H1 (cell line): ENCODE measurements at regions of chr5 and their contacts with region 1.

Region 1: GRCh38 chr5:157303667-157304327 is 37.9 kb downstream of the CYFIP2 start:
- DNase-seq: peak in 1 of 2 experiments; percentile 84
- H3K4me3 ChIP-seq: no peak overlapping the region
- H3K27ac ChIP-seq: no peak overlapping the region
- H3K4me1 ChIP-seq: no peaks in the 10 kb centered on the region
- H3K27me3 ChIP-seq: no peaks in the 10 kb centered on the region
- CTCF ChIP-seq: peak; percentile 82 to 99 (median 95)
- EP300 ChIP-seq: no peak
- POLR2A ChIP-seq: no peak
- RAD21 ChIP-seq: peak; percentile 43 to 63; a peak in 3 of 4 replicates

Region 2: GRCh38 chr5:156715287-156715686 is 588.5 kb before region 1 on chr5:
- CTCF ChIA-PET with region 1: no interaction called
- POLR2A ChIA-PET with region 1: no interaction called
- DNase-seq: no peak
- H3K4me3 ChIP-seq: no peak overlapping the region
- H3K27ac ChIP-seq: no peak overlapping the region
- H3K4me1 ChIP-seq: peaks cover 0 to 11% (median 3%) of the 10 kb centered on the region in 4 experiments; a peak in 3 of 7 replicates
- H3K27me3 ChIP-seq: no peaks in the 10 kb centered on the region
- CTCF ChIP-seq: no peak
- EP300 ChIP-seq: no peak
- POLR2A ChIP-seq: no peak
- RAD21 ChIP-seq: no peak

Region 3: DNA sequence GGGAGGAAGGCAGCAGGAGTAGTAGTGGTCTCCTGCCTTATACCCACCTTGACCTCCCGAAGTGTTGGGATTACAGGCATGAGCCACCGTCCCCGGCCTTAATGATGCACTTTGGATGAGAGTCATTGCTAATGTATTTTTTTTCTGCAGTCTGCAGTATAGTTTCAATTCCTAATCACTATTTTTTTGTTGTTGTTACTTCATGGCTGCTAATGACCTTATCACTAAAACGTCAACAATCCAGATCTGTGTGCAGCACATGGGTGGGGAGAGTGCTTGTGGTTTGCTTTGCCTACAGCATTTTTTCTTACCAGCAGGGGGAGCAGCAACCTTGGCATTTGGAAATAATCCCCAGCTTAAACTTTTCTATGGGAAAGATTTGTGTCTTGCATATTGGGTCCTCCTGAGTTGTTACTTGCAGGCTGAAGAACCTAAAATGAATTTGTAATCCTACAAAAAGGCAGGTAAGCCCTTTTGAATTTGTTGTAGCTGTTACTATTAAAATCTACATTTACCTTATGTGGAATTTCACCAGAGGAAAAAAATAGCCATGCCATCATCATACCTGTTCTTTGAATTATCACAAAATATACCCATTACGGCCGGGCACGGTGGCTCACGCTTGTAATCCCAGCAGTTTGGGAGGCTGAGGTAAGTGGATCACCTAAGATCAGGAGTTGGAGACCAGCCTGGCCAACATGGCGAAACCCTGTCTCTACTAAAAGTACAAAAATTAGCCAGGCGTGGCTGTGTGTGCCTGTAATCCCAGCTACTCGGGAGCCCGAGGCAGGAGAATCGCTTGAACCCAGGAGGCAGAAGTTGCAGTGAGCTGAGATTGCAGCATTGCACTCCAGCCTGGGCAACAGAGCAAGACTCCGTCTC is 154.8 kb before region 1 on chr5:
- CTCF ChIA-PET with region 1: interaction called, 10 read pairs
- POLR2A ChIA-PET with region 1: no interaction called
- DNase-seq: peak; percentile 21 to 79
- H3K4me3 ChIP-seq: no peak overlapping the region
- H3K27ac ChIP-seq: no peak overlapping the region
- H3K4me1 ChIP-seq: no peaks in the 10 kb centered on the region
- H3K27me3 ChIP-seq: no peaks in the 10 kb centered on the region
- CTCF ChIP-seq: peak; percentile 47 to 82 (median 73)
- EP300 ChIP-seq: no peak
- POLR2A ChIP-seq: no peak
- RAD21 ChIP-seq: peak; percentile 77 to 82

Region 4: DNA sequence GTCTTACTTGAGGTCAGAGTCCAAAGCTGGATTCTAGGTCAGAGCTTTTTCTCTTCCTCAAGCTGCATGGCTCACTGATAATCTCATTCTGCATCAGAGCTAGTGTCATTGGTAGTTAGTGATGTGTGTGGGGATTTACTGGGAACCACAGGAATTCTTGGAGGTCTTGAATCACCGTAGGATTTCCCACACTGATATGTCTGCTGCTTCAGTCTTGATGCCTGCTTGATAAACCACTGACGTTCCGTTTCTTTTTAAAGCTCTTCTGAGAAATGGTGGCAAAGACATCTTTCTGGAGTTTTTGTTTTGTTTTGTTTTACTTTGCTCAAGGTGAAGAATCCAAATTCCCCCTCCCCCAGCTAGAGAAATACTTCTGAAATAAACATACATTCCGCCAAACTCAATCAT is 136.6 kb before region 1 on chr5:
- CTCF ChIA-PET with region 1: no interaction called
- POLR2A ChIA-PET with region 1: no interaction called
- DNase-seq: no peak
- H3K4me3 ChIP-seq: no peak overlapping the region
- H3K27ac ChIP-seq: no peak overlapping the region
- H3K4me1 ChIP-seq: no peaks in the 10 kb centered on the region
- H3K27me3 ChIP-seq: no peaks in the 10 kb centered on the region
- CTCF ChIP-seq: no peak
- EP300 ChIP-seq: no peak
- POLR2A ChIP-seq: no peak
- RAD21 ChIP-seq: no peak

Region 5: DNA sequence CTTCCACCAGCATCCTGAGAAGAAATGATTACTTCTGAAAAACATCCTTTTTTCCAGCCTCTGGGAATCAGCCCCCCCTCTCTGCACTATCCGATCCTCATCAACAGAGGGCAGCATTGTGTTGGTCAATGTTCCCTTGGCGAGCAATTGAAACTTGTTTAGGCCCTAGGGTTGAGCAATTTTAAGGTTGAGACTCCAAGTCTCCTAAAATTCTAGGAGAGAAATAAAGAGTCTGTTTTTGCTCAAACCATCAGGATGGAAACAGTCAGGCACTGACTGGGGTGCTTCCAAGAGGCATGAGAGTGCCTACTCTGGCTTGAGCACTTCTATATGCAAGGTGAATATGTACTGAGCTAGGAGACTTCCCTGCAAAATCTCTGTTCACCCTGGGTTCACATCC is 50.2 kb before region 1 on chr5:
- CTCF ChIA-PET with region 1: interaction called, 53 read pairs
- POLR2A ChIA-PET with region 1: no interaction called
- DNase-seq: peak in 1 of 2 experiments; percentile 83
- H3K4me3 ChIP-seq: no peak overlapping the region
- H3K27ac ChIP-seq: no peak overlapping the region
- H3K4me1 ChIP-seq: no peaks in the 10 kb centered on the region
- H3K27me3 ChIP-seq: no peaks in the 10 kb centered on the region
- CTCF ChIP-seq: peak; percentile 69 to 90 (median 85)
- EP300 ChIP-seq: no peak
- POLR2A ChIP-seq: no peak
- RAD21 ChIP-seq: peak; percentile 83 to 90

Region 6: GRCh38 chr5:157265714-157266285 is 38.0 kb before region 1 on chr5 and contains the start of gene CYFIP2:
- CTCF ChIA-PET with region 1: interaction called, 28 read pairs
- POLR2A ChIA-PET with region 1: interaction called, 4 read pairs
- DNase-seq: no peak
- H3K4me3 ChIP-seq: peak within 1 kb of the TSS; percentile 59 to 82 (median 68)
- H3K27ac ChIP-seq: peak within 1 kb of the TSS; percentile 60; the same call in 1 of the 2 replicates
- H3K4me1 ChIP-seq: peaks cover 8 to 19% (median 13%) of the 10 kb centered on the region in 4 experiments
- H3K27me3 ChIP-seq: no peaks in the 10 kb centered on the region; a peak in 2 of 7 replicates
- CTCF ChIP-seq: no peak
- EP300 ChIP-seq: no peak
- POLR2A ChIP-seq: peak in 1 of 2 experiments; percentile 73; a peak in 2 of 3 replicates
- RAD21 ChIP-seq: no peak
- total RNA-seq, gene CYFIP2: 80.6 and 85.3 TPM in 2 replicates

Region 7: GRCh38 chr5:157271740-157272271 is 32.0 kb before region 1 on chr5:
- CTCF ChIA-PET with region 1: interaction called, 28 read pairs
- POLR2A ChIA-PET with region 1: interaction called, 4 read pairs
- DNase-seq: no peak
- H3K4me3 ChIP-seq: no peak overlapping the region
- H3K27ac ChIP-seq: no peak overlapping the region
- H3K4me1 ChIP-seq: peaks cover 5 to 15% (median 10%) of the 10 kb centered on the region in 4 experiments
- H3K27me3 ChIP-seq: no peaks in the 10 kb centered on the region
- CTCF ChIP-seq: no peak
- EP300 ChIP-seq: no peak
- POLR2A ChIP-seq: no peak
- RAD21 ChIP-seq: no peak

Region 8: DNA sequence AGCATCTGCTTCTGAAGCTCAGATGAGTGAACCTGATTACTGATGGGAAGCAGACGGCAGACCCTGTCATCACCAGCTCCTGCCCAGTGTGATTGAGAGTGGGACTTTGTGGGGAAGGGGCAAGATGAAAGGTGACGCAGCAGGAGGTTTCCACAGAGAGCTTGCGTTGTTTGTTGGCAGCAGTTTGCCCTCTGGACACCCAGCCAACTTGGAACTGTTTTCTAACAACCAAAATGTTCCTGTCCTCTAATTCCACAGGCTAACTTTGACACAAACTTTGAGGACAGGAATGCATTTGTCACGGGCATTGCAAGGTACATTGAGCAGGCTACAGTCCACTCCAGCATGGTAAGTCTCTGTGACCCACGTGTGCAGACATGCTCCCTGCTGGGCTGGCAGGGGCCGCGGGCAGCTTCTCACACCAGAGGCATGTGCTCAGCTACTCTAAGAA is 17.0 kb before region 1 on chr5:
- CTCF ChIA-PET with region 1: interaction called, 25 read pairs
- POLR2A ChIA-PET with region 1: no interaction called
- DNase-seq: no peak
- H3K4me3 ChIP-seq: no peak overlapping the region
- H3K27ac ChIP-seq: no peak overlapping the region
- H3K4me1 ChIP-seq: no peaks in the 10 kb centered on the region; a peak in 3 of 7 replicates
- H3K27me3 ChIP-seq: no peaks in the 10 kb centered on the region
- CTCF ChIP-seq: no peak
- EP300 ChIP-seq: no peak
- POLR2A ChIP-seq: no peak
- RAD21 ChIP-seq: no peak

Region 9: DNA sequence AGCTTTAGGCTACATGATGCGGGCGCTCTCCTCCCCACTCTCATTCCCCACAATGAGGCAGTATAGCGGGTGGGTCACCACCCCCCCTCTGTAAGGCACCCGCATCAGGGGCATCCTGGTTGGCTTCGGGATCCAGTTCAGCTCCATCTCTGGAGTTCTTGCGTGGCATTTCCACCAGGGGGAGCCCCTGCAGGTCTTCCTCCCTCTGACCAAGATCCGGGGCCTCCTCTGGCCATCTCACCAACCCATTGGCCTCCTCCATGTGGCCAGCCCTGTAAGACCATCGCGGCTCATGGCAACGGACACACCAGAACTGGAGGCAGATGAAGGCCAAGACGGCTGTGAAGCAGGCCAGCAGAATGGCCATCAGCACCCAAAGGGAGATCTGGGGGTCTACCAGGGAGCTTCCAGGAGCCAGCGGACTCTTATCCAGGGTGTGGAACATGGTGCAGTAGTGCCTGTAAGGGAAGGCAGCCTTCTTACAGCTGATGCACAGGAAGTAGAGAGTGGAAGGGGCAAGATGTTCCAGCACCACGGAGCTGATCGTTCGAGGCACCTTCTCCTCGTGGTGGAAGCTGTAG is 39.1 kb after region 1 on chr5:
- CTCF ChIA-PET with region 1: interaction called, 23 read pairs
- POLR2A ChIA-PET with region 1: no interaction called
- DNase-seq: peak in 1 of 2 experiments; percentile 82
- H3K4me3 ChIP-seq: no peak overlapping the region
- H3K27ac ChIP-seq: no peak overlapping the region
- H3K4me1 ChIP-seq: no peaks in the 10 kb centered on the region
- H3K27me3 ChIP-seq: no peaks in the 10 kb centered on the region
- CTCF ChIP-seq: peak; percentile 69 to 77 (median 72)
- EP300 ChIP-seq: no peak
- POLR2A ChIP-seq: no peak
- RAD21 ChIP-seq: peak; percentile 29 to 52; a peak in 3 of 4 replicates

Region 10: GRCh38 chr5:157378502-157378901 is 74.7 kb after region 1 on chr5:
- CTCF ChIA-PET with region 1: no interaction called
- POLR2A ChIA-PET with region 1: no interaction called
- DNase-seq: no peak
- H3K4me3 ChIP-seq: no peak overlapping the region
- H3K27ac ChIP-seq: no peak overlapping the region
- H3K4me1 ChIP-seq: no peaks in the 10 kb centered on the region
- H3K27me3 ChIP-seq: no peaks in the 10 kb centered on the region
- CTCF ChIP-seq: peak in 1 of 3 experiments; percentile 8; a peak in 1 of 4 replicates
- EP300 ChIP-seq: no peak
- POLR2A ChIP-seq: no peak
- RAD21 ChIP-seq: no peak

Region 11: DNA sequence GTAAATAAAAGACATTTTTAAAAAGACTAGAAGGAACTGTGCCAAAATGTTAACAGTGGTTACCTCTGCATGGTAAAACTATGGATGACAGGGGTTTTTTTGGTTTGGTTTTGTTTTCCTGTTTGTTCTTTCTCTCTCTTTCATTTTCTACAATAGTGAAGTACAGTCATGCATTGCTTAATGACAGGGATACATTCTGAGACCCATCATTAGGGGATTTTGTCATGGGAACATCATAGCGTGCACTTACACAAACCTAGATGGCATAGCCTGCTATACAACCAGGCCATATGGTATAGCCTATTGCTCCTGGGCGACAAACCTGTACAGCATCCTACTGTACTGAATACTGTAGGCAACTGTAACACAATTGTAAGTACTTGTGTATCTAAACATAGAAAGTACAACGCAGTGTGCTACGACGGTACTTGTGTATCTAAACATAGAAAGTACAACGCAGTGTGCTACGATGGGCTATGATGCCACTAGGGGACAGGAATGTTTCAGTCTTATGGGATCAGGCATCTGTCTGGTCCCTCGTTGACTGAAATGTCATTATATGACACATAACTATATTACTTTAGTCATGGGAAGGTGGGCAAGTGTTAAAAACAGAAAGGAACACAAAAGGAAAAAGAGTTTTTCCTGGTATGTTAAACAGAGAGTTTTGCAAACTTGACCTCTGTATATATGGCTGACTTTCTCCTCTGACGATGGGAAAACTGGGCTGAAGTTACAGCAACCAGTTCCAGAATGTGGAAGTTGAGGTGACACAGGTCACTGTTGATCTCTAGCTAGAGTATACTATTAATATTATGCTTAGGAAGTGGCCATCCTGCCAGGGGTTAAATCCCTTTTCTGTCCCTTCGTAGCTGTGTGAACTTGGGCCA is 279.2 kb after region 1 on chr5:
- CTCF ChIA-PET with region 1: no interaction called
- POLR2A ChIA-PET with region 1: no interaction called
- DNase-seq: no peak
- H3K4me3 ChIP-seq: no peak overlapping the region
- H3K27ac ChIP-seq: no peak overlapping the region
- H3K4me1 ChIP-seq: no peaks in the 10 kb centered on the region
- H3K27me3 ChIP-seq: no peaks in the 10 kb centered on the region
- CTCF ChIP-seq: no peak
- EP300 ChIP-seq: no peak
- POLR2A ChIP-seq: no peak
- RAD21 ChIP-seq: no peak